MCF 10A (cell line): ENCODE measurements at regions of chr13 and their contacts with region 1.

Region 1: GRCh38 chr13:40190641-40191100 is 475.8 kb downstream of the FOXO1 start:
- DNase-seq: peak; percentile 78
- H3K4me3 Mint-ChIP-seq: peak overlapping the region; percentile 10
- H3K27ac Mint-ChIP-seq: peak overlapping the region; percentile 70
- H3K4me1 Mint-ChIP-seq: peaks cover 23% of the 10 kb centered on the region
- H3K27me3 Mint-ChIP-seq: no peaks in the 10 kb centered on the region
- CTCF ChIP-seq: no peak

Region 2: DNA sequence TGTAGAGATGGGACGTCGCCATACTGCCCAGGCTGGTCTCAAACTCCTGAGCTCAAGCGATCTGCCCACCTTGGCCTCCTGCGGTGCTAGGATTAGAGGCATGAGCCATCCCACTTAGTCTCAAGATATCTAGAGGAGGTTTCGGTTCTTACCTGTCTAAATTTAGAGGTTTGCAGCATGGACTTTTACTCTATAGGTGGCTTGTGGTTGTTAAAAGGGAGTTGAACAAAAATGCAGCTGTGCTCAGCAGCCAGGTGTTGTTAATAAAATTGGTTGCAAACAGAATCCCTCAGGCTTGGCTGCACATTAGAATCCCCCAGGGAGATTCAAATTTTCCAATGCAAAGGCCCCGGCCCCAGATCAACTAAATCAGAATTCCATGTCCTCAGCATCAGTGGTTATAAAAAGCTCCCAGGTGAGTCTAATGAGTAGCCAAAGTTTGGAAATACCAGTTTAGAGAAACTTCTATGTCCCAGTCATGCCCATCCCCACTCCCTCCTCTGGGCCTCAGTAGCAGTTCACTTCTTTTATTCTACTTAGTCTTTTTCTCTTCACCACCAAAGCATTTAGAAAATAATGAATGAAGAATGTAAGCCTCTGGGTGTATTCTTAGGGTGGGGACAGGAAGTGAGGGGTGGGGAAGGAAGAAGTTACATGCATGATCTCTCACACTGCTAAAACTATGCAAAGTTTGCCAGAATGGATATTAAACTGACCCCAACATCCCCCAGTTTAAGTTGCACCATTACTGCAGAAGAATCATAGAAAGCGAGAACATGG is 64.2 kb before region 1 on chr13:
- CTCF ChIA-PET with region 1: no interaction called
- POLR2A ChIA-PET with region 1: no interaction called
- intact Hi-C with region 1: no loop called
- DNase-seq: no peak
- H3K4me3 Mint-ChIP-seq: no peak overlapping the region
- H3K27ac Mint-ChIP-seq: no peak overlapping the region
- H3K4me1 Mint-ChIP-seq: peaks cover 26% of the 10 kb centered on the region
- H3K27me3 Mint-ChIP-seq: no peaks in the 10 kb centered on the region
- CTCF ChIP-seq: no peak

Region 3: GRCh38 chr13:40149611-40150274 is 40.9 kb before region 1 on chr13:
- CTCF ChIA-PET with region 1: interaction called, 4 read pairs
- POLR2A ChIA-PET with region 1: interaction called, 11 read pairs
- intact Hi-C with region 1: no loop called
- DNase-seq: peak; percentile 90
- H3K4me3 Mint-ChIP-seq: no peak overlapping the region
- H3K27ac Mint-ChIP-seq: peak overlapping the region; percentile 94
- H3K4me1 Mint-ChIP-seq: peaks cover 50% of the 10 kb centered on the region
- H3K27me3 Mint-ChIP-seq: no peaks in the 10 kb centered on the region
- CTCF ChIP-seq: no peak

Region 4: DNA sequence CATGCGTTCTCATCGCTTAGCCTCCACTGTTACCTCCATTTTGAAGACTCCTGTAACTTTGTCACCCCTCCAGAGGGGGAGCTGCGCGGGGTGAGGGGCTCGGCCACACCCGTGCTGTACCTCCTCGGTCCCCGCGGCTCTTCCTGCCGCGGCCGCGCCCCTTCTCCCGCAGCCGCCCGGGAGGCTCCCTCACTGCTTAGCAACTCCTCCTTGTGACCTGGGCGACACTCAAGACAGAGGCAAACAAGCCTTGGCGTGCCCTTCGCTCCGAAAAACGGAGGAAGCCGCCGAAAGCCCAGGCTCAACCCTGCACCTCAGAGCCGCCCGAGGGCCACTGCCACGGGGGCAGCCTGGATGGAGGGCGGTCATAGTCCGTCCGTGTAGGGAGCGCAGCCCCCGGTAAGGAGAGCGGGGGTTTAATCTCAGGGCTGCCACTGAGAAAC is 18.5 kb before region 1 on chr13:
- CTCF ChIA-PET with region 1: interaction called, 4 read pairs
- POLR2A ChIA-PET with region 1: interaction called, 12 read pairs
- intact Hi-C with region 1: no loop called
- DNase-seq: no peak
- H3K4me3 Mint-ChIP-seq: no peak overlapping the region
- H3K27ac Mint-ChIP-seq: peak overlapping the region; percentile 52
- H3K4me1 Mint-ChIP-seq: peaks cover 44% of the 10 kb centered on the region
- H3K27me3 Mint-ChIP-seq: no peaks in the 10 kb centered on the region
- CTCF ChIP-seq: no peak